ENCODE measurements at regions of chrX and their contacts with region 1.

Region 1: GRCh38 chrX:38166478-38167083 is 54.1 kb downstream of the SRPX start:
- DNase-seq: peak; percentile 12 to 21 (median 16)
- ATAC-seq: no peak
- H3K4me3 ChIP-seq: no peak overlapping the region
- H3K27ac ChIP-seq: no peak overlapping the region
- H3K4me1 ChIP-seq: no peaks in the 10 kb centered on the region
- H3K27me3 ChIP-seq: no peaks in the 10 kb centered on the region
- CTCF ChIP-seq: peak; percentile 27 to 64 (median 49)
- POLR2A ChIP-seq: no peak

Region 2: DNA sequence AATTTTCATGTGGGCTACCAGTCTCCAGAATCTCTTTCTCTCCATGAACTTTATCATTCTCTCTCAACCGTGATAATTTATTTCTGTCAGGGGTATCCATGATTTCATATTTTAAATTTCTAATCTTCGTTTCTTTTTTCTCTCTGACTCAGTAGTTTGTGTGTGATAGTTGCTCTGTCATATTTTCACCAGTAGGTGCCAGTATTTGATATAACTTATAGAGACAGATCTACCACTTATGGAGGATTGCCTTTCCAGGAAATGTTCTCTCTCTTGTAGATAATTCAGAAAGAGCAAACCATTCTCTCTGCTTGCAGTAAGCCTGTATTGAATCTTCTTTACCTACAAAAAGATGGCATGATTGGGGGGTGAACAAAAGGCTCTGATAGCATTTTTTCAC is 239.9 kb before region 1 on chrX:
- intact Hi-C with region 1: loop called (anchors 10 kb)
- DNase-seq: no peak
- ATAC-seq: no peak
- H3K4me3 ChIP-seq: no peak overlapping the region
- H3K27ac ChIP-seq: no peak overlapping the region
- H3K4me1 ChIP-seq: no peaks in the 10 kb centered on the region
- H3K27me3 ChIP-seq: no peaks in the 10 kb centered on the region
- CTCF ChIP-seq: peak; percentile 10 to 69 (median 55)
- POLR2A ChIP-seq: no peak

Region 3: DNA sequence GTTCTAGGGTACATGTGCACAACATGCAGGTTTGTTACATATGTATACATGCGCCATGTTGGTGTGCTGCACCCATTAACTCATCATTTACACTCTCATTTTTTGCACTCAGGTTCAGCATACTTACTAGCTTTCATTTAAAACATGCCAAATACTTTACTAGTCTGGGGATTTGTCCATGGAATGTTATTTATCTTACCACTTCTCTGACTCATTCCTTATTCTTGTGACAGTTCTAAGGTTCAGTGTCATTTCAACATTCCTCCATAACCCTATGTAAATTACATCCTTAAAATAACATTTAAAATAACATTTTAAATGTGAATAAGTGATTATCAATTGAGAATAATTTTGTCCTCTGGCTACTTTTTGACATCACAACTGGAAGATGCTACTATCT is 179.7 kb before region 1 on chrX:
- intact Hi-C with region 1: no loop called
- DNase-seq: no peak
- ATAC-seq: no peak
- H3K4me3 ChIP-seq: no peak overlapping the region
- H3K27ac ChIP-seq: no peak overlapping the region
- H3K4me1 ChIP-seq: no peaks in the 10 kb centered on the region
- H3K27me3 ChIP-seq: no peaks in the 10 kb centered on the region
- CTCF ChIP-seq: no peak
- POLR2A ChIP-seq: no peak